A673 (cell line): ENCODE measurements at regions of chrX and their contacts with region 1.

Region 1: DNA sequence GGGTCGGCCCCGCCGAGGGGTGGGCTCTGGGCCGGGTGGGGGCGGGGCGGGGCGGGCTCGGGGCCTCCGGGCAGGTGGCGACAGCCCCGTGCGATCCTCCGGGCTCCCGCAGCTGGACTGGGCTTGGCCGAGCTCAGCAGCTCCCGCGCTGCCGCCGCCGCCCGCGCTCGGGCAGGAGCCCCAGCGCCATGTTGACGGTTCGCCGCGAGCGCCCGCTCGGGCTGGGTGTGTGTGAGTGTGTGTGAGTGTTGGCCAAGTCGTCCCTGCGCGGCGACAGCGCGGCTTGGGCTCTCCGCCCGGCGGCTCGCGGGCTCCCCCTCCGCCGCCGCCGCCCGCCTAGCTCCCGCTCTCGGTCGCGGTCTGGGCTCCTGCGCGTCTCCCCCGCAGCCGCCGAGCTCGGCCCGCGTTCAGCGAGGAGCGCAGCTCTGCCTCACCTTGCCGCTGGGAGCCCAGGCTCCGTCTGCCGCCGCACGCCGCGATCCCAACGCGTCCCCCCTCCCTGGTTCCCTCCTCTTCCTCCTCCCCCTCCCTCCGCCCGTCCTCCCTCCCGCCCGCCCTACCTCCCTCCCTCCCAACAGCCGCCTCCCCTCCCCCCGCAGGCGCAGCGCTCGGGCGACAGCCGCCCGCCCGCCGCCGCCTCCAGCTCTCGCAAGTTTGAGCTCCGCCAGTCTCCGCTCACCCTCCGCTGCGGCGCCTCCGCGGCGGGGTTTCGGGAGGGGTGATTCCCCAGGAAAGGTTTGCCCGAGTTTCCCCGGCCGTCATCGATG is at the start of gene BCOR:
- DNase-seq: peak; percentile 81
- H3K4me3 ChIP-seq: peak within 1 kb of the TSS; percentile 64
- H3K27ac ChIP-seq: peak within 1 kb of the TSS; percentile 69
- H3K4me1 ChIP-seq: peaks cover 31% of the 10 kb centered on the region
- H3K27me3 ChIP-seq: no peaks in the 10 kb centered on the region
- CTCF ChIP-seq: no peak
- total RNA-seq, gene BCOR: 58.8 and 59.0 TPM in 2 replicates

Region 2: GRCh38 chrX:39149761-39150160 is 947.9 kb before region 1 on chrX:
- CTCF ChIA-PET with region 1: no interaction called
- POLR2A ChIA-PET with region 1: interaction called, 21 read pairs
- intact Hi-C with region 1: no loop called
- DNase-seq: peak; percentile 53
- H3K4me3 ChIP-seq: no peak overlapping the region
- H3K27ac ChIP-seq: no peak overlapping the region
- H3K4me1 ChIP-seq: no peaks in the 10 kb centered on the region
- H3K27me3 ChIP-seq: no peaks in the 10 kb centered on the region
- CTCF ChIP-seq: peak; percentile 83

Region 3: GRCh38 chrX:39814391-39814790 is 283.3 kb before region 1 on chrX:
- CTCF ChIA-PET with region 1: no interaction called
- POLR2A ChIA-PET with region 1: no interaction called
- intact Hi-C with region 1: loop called (anchors 5 kb)
- DNase-seq: peak; percentile 35
- H3K4me3 ChIP-seq: no peak overlapping the region
- H3K27ac ChIP-seq: no peak overlapping the region
- H3K4me1 ChIP-seq: peaks cover 16% of the 10 kb centered on the region
- H3K27me3 ChIP-seq: no peaks in the 10 kb centered on the region
- CTCF ChIP-seq: peak; percentile 61

Region 4: GRCh38 chrX:40175511-40176350 is 78.1 kb after region 1 on chrX:
- CTCF ChIA-PET with region 1: no interaction called
- POLR2A ChIA-PET with region 1: interaction called, 6 read pairs
- intact Hi-C with region 1: loop called (anchors 2 kb)
- DNase-seq: peak; percentile 85
- H3K4me3 ChIP-seq: peak overlapping the region; percentile 43
- H3K27ac ChIP-seq: peak overlapping the region; percentile 94
- H3K4me1 ChIP-seq: peaks cover 35% of the 10 kb centered on the region
- H3K27me3 ChIP-seq: no peaks in the 10 kb centered on the region
- CTCF ChIP-seq: no peak

Region 5: GRCh38 chrX:40468033-40468846 is 370.6 kb after region 1 on chrX:
- CTCF ChIA-PET with region 1: no interaction called
- POLR2A ChIA-PET with region 1: no interaction called
- intact Hi-C with region 1: no loop called
- DNase-seq: peak; percentile 66
- H3K4me3 ChIP-seq: no peak overlapping the region
- H3K27ac ChIP-seq: no peak overlapping the region
- H3K4me1 ChIP-seq: peaks cover 32% of the 10 kb centered on the region
- H3K27me3 ChIP-seq: no peaks in the 10 kb centered on the region
- CTCF ChIP-seq: peak; percentile 49